ENCODE measurements at regions of chr5 and their contacts with region 1.

Region 1: GRCh38 chr5:887947-888637 is 4.5 kb downstream of the BRD9 start:
- DNase-seq: no peak
- H3K4me3 ChIP-seq: no peak overlapping the region
- H3K27ac ChIP-seq: no peak overlapping the region
- H3K4me1 ChIP-seq: peaks cover 5 to 8% of the 10 kb centered on the region in 2 donors
- H3K27me3 ChIP-seq: no peaks in the 10 kb centered on the region
- CTCF ChIP-seq: no peak
- POLR2A ChIP-seq: no peak

Region 2: GRCh38 chr5:871596-872298 is 16.3 kb before region 1 on chr5:
- intact Hi-C with region 1: loop called (anchors 1 kb)
- DNase-seq: no peak
- H3K4me3 ChIP-seq: no peak overlapping the region
- H3K27ac ChIP-seq: no peak overlapping the region
- H3K4me1 ChIP-seq: no peaks in the 10 kb centered on the region
- H3K27me3 ChIP-seq: no peaks in the 10 kb centered on the region
- CTCF ChIP-seq: no peak
- POLR2A ChIP-seq: no peak

Region 3: DNA sequence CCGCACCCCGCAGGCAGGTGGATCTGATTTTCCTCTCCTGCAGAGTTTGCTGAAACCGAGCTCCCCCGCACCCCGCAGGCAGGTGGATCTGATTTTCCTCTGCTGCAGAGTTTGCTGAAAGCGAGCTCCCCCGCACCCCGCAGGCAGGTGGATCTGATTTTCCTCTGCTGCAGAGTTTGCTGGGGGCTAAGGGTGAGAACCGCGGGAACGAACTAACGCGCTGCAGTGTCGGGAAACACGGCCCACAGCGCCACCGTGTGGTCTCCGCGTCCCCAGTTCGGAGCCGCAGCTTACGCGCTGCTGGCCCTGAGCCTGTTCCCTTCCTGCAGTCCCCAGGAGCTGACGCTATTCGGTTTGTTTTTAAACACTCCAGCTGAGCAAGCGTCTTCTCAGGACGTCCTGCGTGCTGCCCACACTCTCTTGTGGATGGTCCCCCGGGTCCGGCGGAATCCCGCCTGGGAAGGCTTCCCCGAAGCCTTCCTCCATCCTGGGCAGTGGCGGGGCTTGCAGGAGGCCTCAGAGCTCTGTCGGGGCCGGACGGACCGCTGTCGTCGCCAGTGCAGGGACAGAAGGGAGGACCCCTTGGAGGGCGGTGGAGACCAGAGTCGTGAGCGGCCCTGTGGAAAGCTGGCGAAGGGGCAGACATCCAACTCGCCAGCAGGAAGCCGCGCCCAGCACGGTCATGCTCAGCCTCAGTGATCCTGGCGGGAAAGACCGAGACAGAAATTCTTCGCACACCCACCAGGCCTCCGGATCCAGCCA is 756.9 kb after region 1 on chr5:
- intact Hi-C with region 1: no loop called
- DNase-seq: peak; percentile 45 to 81
- H3K4me3 ChIP-seq: peak overlapping the region in 2 of 3 donors; percentile 35 to 62
- H3K27ac ChIP-seq: no peak overlapping the region
- H3K4me1 ChIP-seq: peaks cover 0 to 3% of the 10 kb centered on the region in 2 donors
- H3K27me3 ChIP-seq: peaks cover 9 to 20% of the 10 kb centered on the region in 2 donors
- CTCF ChIP-seq: peak; percentile 42 to 79 (median 65)
- POLR2A ChIP-seq: no peak